Activated B cell treated with CpG ODN at 0.5 μM for 24 hours (primary cell): ENCODE measurements at regions of chr10 and their contacts with region 1.

Region 1: GRCh38 chr10:114173921-114174694 is at the start of gene CCDC186:
- DNase-seq: peak; percentile 96
- ATAC-seq: peak; percentile 98
- H3K4me3 Mint-ChIP-seq: peak within 1 kb of the TSS; percentile 97
- H3K27ac Mint-ChIP-seq: peak within 1 kb of the TSS; percentile 95
- H3K4me1 Mint-ChIP-seq: peaks cover 29% of the 10 kb centered on the region
- H3K27me3 Mint-ChIP-seq: peaks cover 1% of the 10 kb centered on the region
- CTCF ChIP-seq: no peak
- total RNA-seq, gene CCDC186: 19.7 and 24.8 TPM in 2 replicates

Region 2: DNA sequence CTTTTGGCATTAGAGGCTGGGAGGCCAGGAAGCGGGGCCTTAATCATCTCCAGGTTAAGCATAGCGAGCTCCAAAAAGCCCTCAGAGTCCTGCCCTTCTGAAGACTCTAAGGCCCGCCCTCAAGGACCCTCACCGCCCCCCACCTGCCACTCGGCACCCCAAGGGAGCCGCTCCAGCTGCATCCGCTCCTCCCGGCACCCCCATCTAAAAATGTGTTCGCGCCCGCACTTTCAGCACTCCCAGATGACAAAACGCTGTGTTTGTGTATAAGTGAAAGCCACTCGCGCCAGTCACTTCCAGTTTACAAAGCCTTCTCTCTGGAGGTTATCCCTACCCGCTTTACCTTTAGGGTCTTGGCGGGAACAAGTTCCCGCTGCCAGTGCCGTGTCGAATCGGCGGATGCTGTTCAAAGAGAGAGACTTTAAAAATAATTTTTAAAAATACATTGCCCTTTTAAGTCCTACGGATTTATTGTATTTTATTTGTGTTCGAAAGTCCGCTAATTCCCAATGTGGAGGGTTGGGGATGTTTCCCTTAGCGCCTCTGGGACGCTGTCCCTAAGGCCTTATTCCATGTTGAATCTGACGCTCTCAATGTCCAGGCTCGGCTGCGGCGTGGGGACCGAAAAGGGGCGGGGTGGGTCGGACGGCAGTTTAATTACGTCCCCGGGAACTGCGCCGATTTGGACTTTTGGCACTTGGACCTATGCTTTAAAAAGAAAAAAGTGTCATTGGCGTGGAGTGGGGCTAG is 319.9 kb before region 1 on chr10 and contains the starts of genes DCLRE1A and NHLRC2:
- CTCF ChIA-PET with region 1: no interaction called
- POLR2A ChIA-PET with region 1: interaction called, 4 read pairs
- intact Hi-C with region 1: loop called (anchors 1 kb)
- DNase-seq: peak; percentile 62
- ATAC-seq: peak; percentile 68
- H3K4me3 Mint-ChIP-seq: peak within 1 kb of the TSS; percentile 98
- H3K27ac Mint-ChIP-seq: peak within 1 kb of the TSS; percentile 99
- H3K4me1 Mint-ChIP-seq: peaks cover 51% of the 10 kb centered on the region
- H3K27me3 Mint-ChIP-seq: no peaks in the 10 kb centered on the region
- CTCF ChIP-seq: no peak
- total RNA-seq, gene DCLRE1A: 4.5 and 4.9 TPM in 2 replicates
- total RNA-seq, gene NHLRC2: 40.3 and 43.9 TPM in 2 replicates

Region 3: GRCh38 chr10:114043532-114044246 is 130.4 kb before region 1 on chr10 and contains the start of gene ADRB1:
- CTCF ChIA-PET with region 1: no interaction called
- POLR2A ChIA-PET with region 1: no interaction called
- intact Hi-C with region 1: loop called (anchors 5 kb)
- DNase-seq: no peak
- ATAC-seq: peak; percentile 20
- H3K4me3 Mint-ChIP-seq: peak within 1 kb of the TSS; percentile 75
- H3K27ac Mint-ChIP-seq: no peak within 1 kb of the TSS
- H3K4me1 Mint-ChIP-seq: peaks cover 21% of the 10 kb centered on the region
- H3K27me3 Mint-ChIP-seq: peaks cover 56% of the 10 kb centered on the region
- CTCF ChIP-seq: no peak
- total RNA-seq, gene ADRB1: not detected in 2 replicates

Region 4: GRCh38 chr10:114188001-114188400 is 13.9 kb after region 1 on chr10:
- CTCF ChIA-PET with region 1: no interaction called
- POLR2A ChIA-PET with region 1: interaction called, 11 read pairs
- intact Hi-C with region 1: no loop called
- DNase-seq: no peak
- ATAC-seq: no peak
- H3K4me3 Mint-ChIP-seq: no peak overlapping the region
- H3K27ac Mint-ChIP-seq: no peak overlapping the region
- H3K4me1 Mint-ChIP-seq: peaks cover 8% of the 10 kb centered on the region
- H3K27me3 Mint-ChIP-seq: peaks cover 3% of the 10 kb centered on the region
- CTCF ChIP-seq: no peak

Region 5: GRCh38 chr10:114437456-114438292 is 263.6 kb after region 1 on chr10:
- CTCF ChIA-PET with region 1: no interaction called
- POLR2A ChIA-PET with region 1: no interaction called
- intact Hi-C with region 1: no loop called
- DNase-seq: no peak
- ATAC-seq: no peak
- H3K4me3 Mint-ChIP-seq: no peak overlapping the region
- H3K27ac Mint-ChIP-seq: no peak overlapping the region
- H3K4me1 Mint-ChIP-seq: no peaks in the 10 kb centered on the region
- H3K27me3 Mint-ChIP-seq: no peaks in the 10 kb centered on the region
- CTCF ChIP-seq: no peak

Region 6: GRCh38 chr10:114499630-114500190 is 325.6 kb after region 1 on chr10:
- CTCF ChIA-PET with region 1: no interaction called
- POLR2A ChIA-PET with region 1: interaction called, 3 read pairs
- intact Hi-C with region 1: loop called (anchors 1 kb)
- DNase-seq: peak; percentile 37
- ATAC-seq: peak; percentile 49
- H3K4me3 Mint-ChIP-seq: peak overlapping the region; percentile 67
- H3K27ac Mint-ChIP-seq: peak overlapping the region; percentile 96
- H3K4me1 Mint-ChIP-seq: peaks cover 83% of the 10 kb centered on the region
- H3K27me3 Mint-ChIP-seq: no peaks in the 10 kb centered on the region
- CTCF ChIP-seq: no peak

Region 7: GRCh38 chr10:114821293-114821914 is 647.3 kb after region 1 on chr10 and contains the start of gene FHIP2A:
- CTCF ChIA-PET with region 1: no interaction called
- POLR2A ChIA-PET with region 1: no interaction called
- intact Hi-C with region 1: loop called (anchors 1 kb)
- DNase-seq: peak; percentile 95
- ATAC-seq: peak; percentile 93
- H3K4me3 Mint-ChIP-seq: peak within 1 kb of the TSS; percentile 91
- H3K27ac Mint-ChIP-seq: peak within 1 kb of the TSS; percentile 90
- H3K4me1 Mint-ChIP-seq: peaks cover 27% of the 10 kb centered on the region
- H3K27me3 Mint-ChIP-seq: no peaks in the 10 kb centered on the region
- CTCF ChIP-seq: no peak
- total RNA-seq, gene FHIP2A: 16.5 and 20.2 TPM in 2 replicates

Region 8: GRCh38 chr10:115092555-115093285 is 918.6 kb after region 1 on chr10:
- CTCF ChIA-PET with region 1: no interaction called
- POLR2A ChIA-PET with region 1: no interaction called
- intact Hi-C with region 1: loop called (anchors 5 kb)
- DNase-seq: peak; percentile 60
- ATAC-seq: peak; percentile 84
- H3K4me3 Mint-ChIP-seq: peak overlapping the region; percentile 85
- H3K27ac Mint-ChIP-seq: no peak overlapping the region
- H3K4me1 Mint-ChIP-seq: peaks cover 13% of the 10 kb centered on the region
- H3K27me3 Mint-ChIP-seq: peaks cover 35% of the 10 kb centered on the region
- CTCF ChIP-seq: no peak